ENCODE measurements at regions of chr15 and their contacts with region 1.

Region 1: GRCh38 chr15:41331833-41332787 is at the start of gene OIP5:
- DNase-seq: peak; percentile 96 to 99
- H3K4me3 ChIP-seq: peak within 1 kb of the TSS; percentile 89 to 91
- H3K27ac ChIP-seq: peak within 1 kb of the TSS in 1 of 2 donors; percentile 40
- H3K4me1 ChIP-seq: peaks cover 0 to 8% of the 10 kb centered on the region in 2 donors
- H3K27me3 ChIP-seq: no peaks in the 10 kb centered on the region
- CTCF ChIP-seq: peak; percentile 59 to 74 (median 67)
- total RNA-seq, gene OIP5: not detected

Region 2: DNA sequence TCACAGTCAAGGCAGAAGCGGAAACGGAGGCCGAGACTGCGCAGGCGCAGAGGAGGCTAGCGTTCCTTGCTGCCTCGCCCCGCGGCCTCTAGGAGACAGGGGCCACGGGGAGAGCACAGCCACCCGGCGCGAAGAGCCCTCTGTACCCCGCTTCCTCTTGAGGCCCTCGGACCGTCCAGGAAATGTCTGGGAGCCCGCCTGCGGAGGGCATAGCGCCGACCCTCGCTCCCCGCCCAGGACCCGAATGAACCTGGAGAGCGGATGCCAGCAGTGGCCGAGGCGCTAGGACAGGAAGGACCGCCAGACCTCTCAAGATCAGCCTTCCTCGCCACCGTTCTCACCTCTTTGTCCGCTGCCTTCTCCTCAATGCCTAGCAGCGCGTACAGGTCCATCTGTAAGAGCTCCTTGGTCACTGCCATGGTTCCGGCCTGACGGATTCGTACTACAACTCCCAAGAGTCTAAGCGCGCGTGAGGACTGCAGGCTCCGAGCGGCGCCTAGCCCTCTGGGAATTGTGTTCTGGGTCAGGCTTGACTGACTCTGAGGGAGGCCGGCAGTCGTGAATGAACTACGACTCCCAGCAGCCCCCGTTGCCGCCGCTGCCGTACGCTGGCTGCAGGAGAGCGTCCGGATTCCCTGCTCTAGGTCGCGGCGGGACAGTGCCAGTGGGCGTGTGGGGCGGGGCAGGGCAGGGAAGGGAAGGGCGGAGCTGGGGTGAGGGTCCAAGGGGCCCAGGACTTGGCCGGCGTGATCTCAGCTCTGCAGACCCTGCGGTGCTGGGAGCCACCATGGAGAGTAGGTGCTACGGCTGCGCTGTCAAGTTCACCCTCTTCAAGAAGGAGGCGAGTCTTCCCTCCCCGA is 524.9 kb before region 1 on chr15 and contains the starts of genes DNAJC17 and ZFYVE19:
- intact Hi-C with region 1: no loop called
- DNase-seq: peak; percentile 91 to 98
- H3K4me3 ChIP-seq: peak within 1 kb of the TSS; percentile 77 to 88
- H3K27ac ChIP-seq: peak within 1 kb of the TSS; percentile 89 to 93
- H3K4me1 ChIP-seq: peaks cover 0 to 18% of the 10 kb centered on the region in 2 donors
- H3K27me3 ChIP-seq: no peaks in the 10 kb centered on the region
- CTCF ChIP-seq: peak in 2 of 3 experiments; percentile 5 to 7
- total RNA-seq, gene DNAJC17: 26.2 TPM
- total RNA-seq, gene ZFYVE19: 61.0 TPM

Region 3: GRCh38 chr15:41283653-41284426 is 48.3 kb before region 1 on chr15:
- intact Hi-C with region 1: loop called (anchors 1 kb)
- DNase-seq: peak; percentile 89 to 99
- H3K4me3 ChIP-seq: peak overlapping the region; percentile 72 to 88
- H3K27ac ChIP-seq: peak overlapping the region; percentile 83 to 84
- H3K4me1 ChIP-seq: peaks cover 6 to 16% of the 10 kb centered on the region in 2 donors
- H3K27me3 ChIP-seq: no peaks in the 10 kb centered on the region
- CTCF ChIP-seq: no peak

Region 4: GRCh38 chr15:41401904-41402267 is 69.8 kb after region 1 on chr15:
- intact Hi-C with region 1: loop called (anchors 5 kb)
- DNase-seq: no peak
- H3K4me3 ChIP-seq: peak overlapping the region; percentile 82 to 91
- H3K27ac ChIP-seq: peak overlapping the region; percentile 82 to 83
- H3K4me1 ChIP-seq: peaks cover 0 to 4% of the 10 kb centered on the region in 2 donors
- H3K27me3 ChIP-seq: no peaks in the 10 kb centered on the region
- CTCF ChIP-seq: no peak

Region 5: DNA sequence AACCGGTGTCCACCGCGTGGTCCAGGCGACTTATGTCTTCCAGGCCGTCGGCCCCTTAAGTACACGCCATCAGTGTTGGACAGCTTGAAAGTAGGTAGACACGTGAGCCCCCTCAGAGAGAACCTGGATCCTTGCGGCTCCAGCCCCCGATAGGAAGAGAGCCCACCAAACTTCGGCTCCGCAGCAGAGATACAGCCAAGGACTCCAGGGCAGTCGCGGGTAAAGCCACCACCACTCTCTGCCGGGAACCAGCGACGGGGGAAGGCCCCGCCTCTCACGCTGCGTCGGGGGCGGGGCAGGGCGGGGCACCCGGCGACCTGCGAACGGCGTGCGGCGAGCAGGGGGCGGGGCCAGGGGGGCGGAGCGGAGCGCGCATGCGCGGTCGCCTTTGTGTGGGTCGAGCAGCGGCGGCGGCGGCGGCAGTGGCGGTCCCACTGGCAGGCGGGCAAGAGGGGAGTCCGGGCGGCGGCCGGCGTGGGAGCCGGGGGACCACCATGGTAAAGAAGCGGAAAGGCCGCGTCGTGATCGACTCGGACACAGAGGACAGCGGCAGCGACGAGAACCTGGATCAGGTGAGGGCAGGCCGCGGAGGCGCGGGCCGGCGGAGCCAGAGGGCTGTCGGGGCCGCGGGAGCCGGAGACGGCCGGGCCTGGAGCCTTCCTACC is 84.8 kb after region 1 on chr15 and contains the start of gene RTF1:
- intact Hi-C with region 1: loop called (anchors 5 kb)
- DNase-seq: peak; percentile 68 to 96
- H3K4me3 ChIP-seq: peak within 1 kb of the TSS; percentile 70 to 86
- H3K27ac ChIP-seq: peak within 1 kb of the TSS; percentile 73 to 80
- H3K4me1 ChIP-seq: peaks cover 7 to 13% of the 10 kb centered on the region in 2 donors
- H3K27me3 ChIP-seq: no peaks in the 10 kb centered on the region
- CTCF ChIP-seq: no peak
- total RNA-seq, gene RTF1: 9.4 TPM

Region 6: DNA sequence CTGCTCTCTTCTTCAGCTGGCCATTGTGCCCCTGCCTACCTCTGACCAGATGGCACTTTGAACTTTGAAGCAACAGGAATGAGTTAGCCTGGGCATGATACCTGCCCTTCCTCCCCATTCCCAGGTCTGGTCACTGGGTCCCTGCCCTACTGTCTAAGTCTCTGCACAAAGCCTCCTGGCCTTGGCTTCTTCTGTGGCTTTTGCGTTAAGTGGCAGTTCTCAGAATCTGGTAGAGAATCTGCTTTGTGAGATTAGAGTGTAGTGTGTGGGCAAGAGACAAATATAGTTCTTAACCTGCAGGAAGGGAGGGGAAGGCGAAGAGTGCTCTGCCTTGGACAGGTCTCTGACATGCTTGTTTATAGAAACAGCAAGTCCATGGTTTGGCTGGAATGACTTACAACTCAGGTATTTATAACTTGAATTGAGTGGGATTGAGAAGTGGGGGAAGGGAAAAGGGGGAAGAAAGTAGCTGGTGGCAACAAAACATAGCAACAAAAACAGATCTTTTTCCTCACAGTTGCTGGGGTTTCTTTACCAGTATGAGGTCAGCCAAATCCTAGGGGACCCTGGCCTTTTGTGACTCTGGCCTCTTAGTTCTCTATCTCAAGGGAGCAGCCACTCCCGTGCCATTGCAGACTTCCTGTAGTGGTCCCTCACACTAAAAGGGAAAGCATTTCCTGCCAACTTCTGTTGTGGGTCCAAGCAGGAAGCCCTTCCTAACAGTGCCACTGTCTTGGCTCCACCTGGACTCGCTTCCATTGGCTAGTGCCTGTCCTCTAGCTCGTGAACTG is 458.8 kb after region 1 on chr15:
- intact Hi-C with region 1: no loop called
- DNase-seq: peak in 1 of 2 donors; percentile 69
- H3K4me3 ChIP-seq: no peak overlapping the region
- H3K27ac ChIP-seq: peak overlapping the region; percentile 66 to 73
- H3K4me1 ChIP-seq: peaks cover 11 to 35% of the 10 kb centered on the region in 2 donors
- H3K27me3 ChIP-seq: no peaks in the 10 kb centered on the region
- CTCF ChIP-seq: no peak

Measured in ascending aorta (tissue), 2 donors.